Activated naive CD4-positive, alpha-beta T cell treated with anti-CD3 and anti-CD28 coated beads for 36 hours (primary cell): ENCODE measurements at regions of chr5 and their contacts with region 1.

Region 1: DNA sequence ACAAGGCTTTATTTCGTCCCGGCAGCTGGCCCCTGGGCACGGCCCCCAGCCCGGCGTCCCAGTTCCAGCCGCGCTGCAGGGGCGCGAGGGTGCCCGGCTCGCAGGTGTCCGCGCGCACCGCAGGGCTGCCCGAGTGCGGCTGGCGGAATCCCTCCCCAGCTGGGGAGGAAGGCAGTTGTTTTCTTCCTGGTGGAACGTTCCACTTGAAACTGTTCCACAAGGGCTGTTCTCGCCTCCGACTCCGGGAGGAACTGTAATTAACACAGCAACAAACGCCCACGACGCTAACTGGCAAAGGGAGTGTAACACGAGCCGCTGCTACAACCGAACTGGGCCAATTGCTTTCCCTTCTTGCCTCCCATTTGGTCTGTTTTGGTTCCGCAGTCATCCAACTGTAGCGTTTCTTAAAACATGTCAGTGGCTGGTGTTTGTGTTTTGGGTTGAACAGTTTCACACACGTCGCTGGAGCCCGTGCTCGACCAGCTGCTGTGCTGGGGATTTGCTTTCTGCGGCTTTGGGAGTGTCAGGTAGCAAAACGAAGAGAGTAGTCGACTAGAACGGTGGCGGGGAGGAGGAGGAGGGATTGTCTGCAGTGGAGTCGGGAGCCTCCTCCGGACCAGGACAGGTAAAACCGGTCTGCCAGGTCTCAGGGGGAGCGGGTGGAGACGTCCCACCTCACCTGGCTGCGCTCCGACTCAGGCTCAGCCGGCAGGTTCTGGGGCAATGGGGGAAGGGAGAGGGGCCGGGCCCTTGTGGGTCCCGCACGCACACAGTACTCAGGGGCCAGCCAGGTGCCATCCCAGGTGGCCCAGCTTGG is 131.6 kb upstream of the NIPBL start:
- DNase-seq: peak; percentile 42
- H3K4me3 Mint-ChIP-seq: peak overlapping the region; percentile 80
- H3K27ac Mint-ChIP-seq: no peak overlapping the region
- H3K4me1 Mint-ChIP-seq: peaks cover 10% of the 10 kb centered on the region
- H3K27me3 Mint-ChIP-seq: peaks cover 36% of the 10 kb centered on the region

Region 2: DNA sequence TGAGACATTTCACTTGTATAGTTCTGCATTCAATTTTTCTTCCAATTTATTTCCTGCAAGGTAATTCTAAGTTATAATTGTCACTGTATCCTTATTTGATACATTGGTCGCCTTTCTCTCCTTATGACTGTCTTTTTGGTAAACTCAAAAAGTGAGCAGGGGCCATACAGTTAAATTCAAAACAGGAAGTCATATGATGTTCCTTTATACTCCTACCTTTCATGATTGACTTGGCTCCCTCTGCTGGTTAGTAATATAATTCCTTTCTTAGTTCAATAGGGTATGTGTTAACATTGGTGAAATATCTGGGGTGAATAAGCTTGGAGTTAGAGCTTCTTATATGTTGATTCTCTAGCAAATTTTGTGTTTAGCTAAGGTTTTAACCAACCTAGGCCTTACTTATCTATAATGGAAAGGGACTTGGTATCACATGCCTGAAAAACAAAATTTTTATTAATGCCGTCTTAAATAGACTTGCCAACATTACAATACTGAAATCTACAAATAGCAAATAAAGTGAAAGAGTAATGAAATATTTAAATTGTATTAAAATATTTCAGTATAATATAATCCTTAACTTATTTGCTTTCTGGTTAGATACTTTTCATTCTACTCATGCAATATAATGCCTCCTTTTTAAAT is 125.5 kb after region 1 on chr5:
- CTCF ChIA-PET with region 1: interaction called, 30 read pairs
- intact Hi-C with region 1: loop called (anchors 1 kb)
- DNase-seq: no peak
- H3K4me3 Mint-ChIP-seq: no peak overlapping the region
- H3K27ac Mint-ChIP-seq: no peak overlapping the region
- H3K4me1 Mint-ChIP-seq: peaks cover 23% of the 10 kb centered on the region
- H3K27me3 Mint-ChIP-seq: no peaks in the 10 kb centered on the region

Region 3: DNA sequence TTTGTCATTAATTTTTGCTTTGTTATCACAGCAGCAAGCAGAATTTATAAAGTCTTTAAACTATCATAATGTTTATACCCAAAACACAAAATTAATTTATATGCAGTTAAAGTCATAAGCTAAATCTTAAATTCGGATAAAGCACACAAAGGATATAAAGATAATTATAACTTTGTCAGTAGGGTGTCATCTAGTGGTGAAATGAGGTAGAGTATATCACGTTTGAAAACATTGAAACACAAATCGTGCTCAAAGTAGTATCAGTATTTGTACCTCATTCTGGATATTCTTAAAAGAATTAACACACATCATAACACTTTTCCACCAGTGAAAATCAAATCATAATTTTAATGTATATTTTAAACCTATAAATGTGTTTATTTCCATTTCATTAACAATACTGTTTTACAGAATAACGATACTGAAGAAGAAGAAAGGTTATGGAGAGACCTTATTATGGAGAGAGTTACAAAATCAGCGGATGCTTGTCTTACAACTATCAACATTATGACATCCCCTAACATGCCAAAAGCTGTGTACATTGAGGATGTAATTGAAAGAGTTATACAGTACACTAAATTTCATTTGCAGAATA is 261.1 kb after region 1 on chr5:
- CTCF ChIA-PET with region 1: interaction called, 11 read pairs
- intact Hi-C with region 1: no loop called
- DNase-seq: no peak
- H3K4me3 Mint-ChIP-seq: no peak overlapping the region
- H3K27ac Mint-ChIP-seq: no peak overlapping the region
- H3K4me1 Mint-ChIP-seq: no peaks in the 10 kb centered on the region
- H3K27me3 Mint-ChIP-seq: no peaks in the 10 kb centered on the region